Testis (tissue), 5 donors: ENCODE measurements at regions of chr14 and their contacts with region 1.

Region 1: GRCh38 chr14:50109342-50109741 is 7.0 kb downstream of the VCPKMT start:
- DNase-seq: no peak
- H3K4me3 ChIP-seq: no peak overlapping the region
- H3K27ac ChIP-seq: no peak overlapping the region
- H3K4me1 ChIP-seq: no peaks in the 10 kb centered on the region
- H3K27me3 ChIP-seq: no peaks in the 10 kb centered on the region
- CTCF ChIP-seq: peak in 2 of 3 experiments; percentile 3 to 13
- POLR2A ChIP-seq: no peak

Region 2: GRCh38 chr14:49867831-49868723 is 241.3 kb before region 1 on chr14:
- intact Hi-C with region 1: loop called (anchors 5 kb)
- DNase-seq: peak; percentile 96
- H3K4me3 ChIP-seq: peak overlapping the region; percentile 66 to 76
- H3K27ac ChIP-seq: peak overlapping the region; percentile 87 to 88
- H3K4me1 ChIP-seq: peaks cover 17% of the 10 kb centered on the region
- H3K27me3 ChIP-seq: no peaks in the 10 kb centered on the region
- CTCF ChIP-seq: no peak
- POLR2A ChIP-seq: no peak

Region 3: DNA sequence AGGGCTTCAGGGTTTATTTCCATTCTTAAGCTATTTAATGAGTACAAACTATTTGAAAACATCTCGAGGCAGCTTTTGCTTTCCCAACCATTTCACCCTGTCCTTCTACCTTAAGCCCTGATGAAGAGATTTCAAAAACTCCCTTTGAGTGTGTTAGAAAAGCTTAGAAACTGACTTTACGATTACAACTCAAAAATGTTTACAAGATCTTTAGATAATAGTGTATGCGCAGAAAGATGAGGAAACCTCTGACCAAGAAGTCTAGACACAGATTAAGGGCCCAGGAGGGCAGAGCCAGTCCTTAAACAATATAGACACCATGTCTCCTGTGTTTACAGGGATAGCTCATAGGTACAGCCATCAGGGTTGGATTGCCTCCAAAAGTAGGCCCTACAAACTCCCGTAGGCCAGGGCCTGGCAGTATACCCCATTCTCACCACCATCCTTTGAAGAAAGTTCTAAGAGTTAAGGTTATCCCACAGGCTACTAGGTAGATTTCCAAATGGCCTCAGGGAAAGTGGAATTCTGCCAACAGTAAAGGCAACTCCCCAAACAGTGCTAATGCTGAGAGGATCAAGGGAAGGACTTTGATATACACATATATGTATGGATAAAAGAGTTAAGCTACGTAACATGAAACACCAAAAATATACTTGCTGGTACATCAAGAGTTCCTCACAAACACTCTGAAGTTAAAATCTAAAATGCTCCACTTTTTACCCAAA is 133.4 kb after region 1 on chr14:
- intact Hi-C with region 1: no loop called
- DNase-seq: no peak
- H3K4me3 ChIP-seq: no peak overlapping the region
- H3K27ac ChIP-seq: no peak overlapping the region
- H3K4me1 ChIP-seq: no peaks in the 10 kb centered on the region
- H3K27me3 ChIP-seq: no peaks in the 10 kb centered on the region
- CTCF ChIP-seq: no peak
- POLR2A ChIP-seq: no peak